Mammary epithelial cell (primary cell): ENCODE measurements at regions of chr9 and their contacts with region 1.

Region 1: DNA sequence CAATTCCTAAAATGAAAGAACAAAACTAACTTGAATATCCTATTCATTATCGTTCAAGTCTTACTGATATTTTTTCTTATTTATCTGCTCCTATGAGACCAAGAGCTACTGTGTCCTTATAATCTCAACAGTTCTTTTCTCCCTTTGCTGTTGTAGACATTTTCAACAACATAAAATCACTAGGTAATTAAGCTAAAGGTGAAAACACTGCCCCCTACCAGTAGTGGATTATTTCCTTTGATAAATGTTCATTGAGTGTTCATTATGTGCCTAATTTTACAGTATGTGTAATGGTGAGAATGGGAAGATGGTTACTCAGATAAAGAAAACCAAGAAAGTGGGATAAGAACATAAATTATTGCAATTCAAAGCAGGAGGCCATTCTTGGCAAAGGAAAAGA is 41.4 kb upstream of the PAPPA start:
- DNase-seq: peak; percentile 25
- H3K4me3 ChIP-seq: no peak overlapping the region
- H3K27ac ChIP-seq: no peak overlapping the region
- H3K4me1 ChIP-seq: no peaks in the 10 kb centered on the region
- H3K27me3 ChIP-seq: no peaks in the 10 kb centered on the region
- CTCF ChIP-seq: peak; percentile 49 to 57

Region 2: DNA sequence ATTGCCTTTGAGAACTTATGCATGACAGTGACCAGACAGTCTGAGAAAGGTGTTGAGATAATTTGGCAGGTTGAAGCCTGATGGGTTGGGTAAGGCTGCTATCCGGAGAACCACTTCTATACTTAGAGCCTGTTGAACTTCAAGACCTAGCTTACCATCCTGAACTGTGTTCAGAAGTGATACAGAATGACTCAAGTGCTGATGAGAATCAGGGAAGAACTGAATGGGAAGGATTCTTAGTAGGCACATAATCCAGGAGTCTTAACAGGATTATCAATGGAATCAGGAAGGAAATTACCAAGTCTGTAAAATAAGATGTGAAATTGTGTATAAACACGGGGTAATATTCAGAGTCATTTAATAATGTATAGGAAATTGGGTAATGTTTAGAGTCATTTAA is 32.3 kb after region 1 on chr9:
- CTCF ChIA-PET with region 1: interaction called, 11 read pairs
- dilution Hi-C with region 1: no loop called
- in situ Hi-C with region 1: no loop called
- intact Hi-C with region 1: no loop called
- DNase-seq: peak; percentile 57
- H3K4me3 ChIP-seq: no peak overlapping the region
- H3K27ac ChIP-seq: peak overlapping the region; percentile 40
- H3K4me1 ChIP-seq: peaks cover 29% of the 10 kb centered on the region
- H3K27me3 ChIP-seq: peaks cover under 1% of the 10 kb centered on the region
- CTCF ChIP-seq: no peak